ENCODE measurements at regions of chr12 and their contacts with region 1.

Region 1: GRCh38 chr12:31524791-31525495 is 66.0 kb downstream of the DENND5B start:
- DNase-seq: peak; percentile 32
- ATAC-seq: peak; percentile 49
- H3K4me3 ChIP-seq: no peak overlapping the region
- H3K4me3 Mint-ChIP-seq: peak overlapping the region; percentile 24
- H3K27ac ChIP-seq: no peak overlapping the region
- H3K27ac Mint-ChIP-seq: peak overlapping the region; percentile 22
- H3K4me1 ChIP-seq: peaks cover 26% of the 10 kb centered on the region in 2 donors
- H3K4me1 Mint-ChIP-seq: peaks cover 70% of the 10 kb centered on the region
- H3K27me3 ChIP-seq: no peaks in the 10 kb centered on the region
- H3K27me3 Mint-ChIP-seq: no peaks in the 10 kb centered on the region
- CTCF ChIP-seq: no peak

Region 2: GRCh38 chr12:31440586-31440985 is 84.4 kb before region 1 on chr12:
- CTCF ChIA-PET with region 1: no interaction called
- POLR2A ChIA-PET with region 1: no interaction called
- intact Hi-C with region 1: no loop called
- DNase-seq: no peak
- ATAC-seq: no peak
- H3K4me3 ChIP-seq: no peak overlapping the region
- H3K4me3 Mint-ChIP-seq: no peak overlapping the region
- H3K27ac ChIP-seq: no peak overlapping the region
- H3K27ac Mint-ChIP-seq: no peak overlapping the region
- H3K4me1 ChIP-seq: no peaks in the 10 kb centered on the region
- H3K4me1 Mint-ChIP-seq: no peaks in the 10 kb centered on the region
- H3K27me3 ChIP-seq: no peaks in the 10 kb centered on the region
- H3K27me3 Mint-ChIP-seq: no peaks in the 10 kb centered on the region
- CTCF ChIP-seq: no peak

Region 3: DNA sequence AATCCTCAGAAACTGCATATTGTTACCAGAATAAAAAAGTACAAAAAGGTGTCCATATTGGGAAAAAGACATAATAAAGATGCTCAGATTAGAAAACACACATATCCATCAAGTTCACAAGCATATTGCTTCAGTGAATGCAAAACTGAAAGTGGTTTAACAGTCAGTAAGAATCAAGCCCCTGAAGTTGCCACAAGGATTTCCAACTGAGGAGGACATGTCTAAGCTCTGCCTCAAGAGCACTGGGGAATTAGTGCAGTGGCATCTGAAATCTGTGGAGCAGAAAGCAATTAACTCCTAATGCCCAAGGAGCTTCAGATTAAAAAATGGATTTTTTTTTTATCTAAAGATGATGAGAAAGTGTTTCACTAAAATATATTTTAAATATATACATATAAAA is 47.3 kb before region 1 on chr12:
- CTCF ChIA-PET with region 1: no interaction called
- POLR2A ChIA-PET with region 1: no interaction called
- intact Hi-C with region 1: loop called (anchors 5 kb)
- DNase-seq: no peak
- ATAC-seq: no peak
- H3K4me3 ChIP-seq: no peak overlapping the region
- H3K4me3 Mint-ChIP-seq: no peak overlapping the region
- H3K27ac ChIP-seq: peak overlapping the region in 1 of 2 donors; percentile 31
- H3K27ac Mint-ChIP-seq: peak overlapping the region; percentile 12
- H3K4me1 ChIP-seq: peaks cover 31 to 42% of the 10 kb centered on the region in 2 donors
- H3K4me1 Mint-ChIP-seq: peaks cover 59% of the 10 kb centered on the region
- H3K27me3 ChIP-seq: no peaks in the 10 kb centered on the region
- H3K27me3 Mint-ChIP-seq: no peaks in the 10 kb centered on the region
- CTCF ChIP-seq: no peak

Region 4: GRCh38 chr12:31562594-31563328 is 37.8 kb after region 1 on chr12:
- CTCF ChIA-PET with region 1: no interaction called
- POLR2A ChIA-PET with region 1: no interaction called
- intact Hi-C with region 1: loop called (anchors 5 kb)
- DNase-seq: no peak
- ATAC-seq: no peak
- H3K4me3 ChIP-seq: no peak overlapping the region
- H3K4me3 Mint-ChIP-seq: no peak overlapping the region
- H3K27ac ChIP-seq: no peak overlapping the region
- H3K27ac Mint-ChIP-seq: no peak overlapping the region
- H3K4me1 ChIP-seq: peaks cover 32 to 47% of the 10 kb centered on the region in 2 donors
- H3K4me1 Mint-ChIP-seq: peaks cover 69% of the 10 kb centered on the region
- H3K27me3 ChIP-seq: no peaks in the 10 kb centered on the region
- H3K27me3 Mint-ChIP-seq: no peaks in the 10 kb centered on the region
- CTCF ChIP-seq: no peak

Region 5: GRCh38 chr12:31612819-31613218 is 87.9 kb after region 1 on chr12:
- CTCF ChIA-PET with region 1: no interaction called
- POLR2A ChIA-PET with region 1: no interaction called
- intact Hi-C with region 1: no loop called
- DNase-seq: no peak
- ATAC-seq: no peak
- H3K4me3 ChIP-seq: no peak overlapping the region
- H3K4me3 Mint-ChIP-seq: no peak overlapping the region
- H3K27ac ChIP-seq: no peak overlapping the region
- H3K27ac Mint-ChIP-seq: no peak overlapping the region
- H3K4me1 ChIP-seq: no peaks in the 10 kb centered on the region
- H3K4me1 Mint-ChIP-seq: no peaks in the 10 kb centered on the region
- H3K27me3 ChIP-seq: no peaks in the 10 kb centered on the region
- H3K27me3 Mint-ChIP-seq: no peaks in the 10 kb centered on the region
- CTCF ChIP-seq: peak; percentile 13